HEK293 (cell line): ENCODE measurements at regions of chr9 and their contacts with region 1.

Region 1: GRCh38 chr9:117399844-117400561 is 14.9 kb downstream of the ASTN2 start:
- H3K4me3 ChIP-seq: no peak overlapping the region
- H3K27ac ChIP-seq: no peak overlapping the region
- H3K4me1 ChIP-seq: peaks cover 5% of the 10 kb centered on the region; the same call in 1 of the 2 replicates
- CTCF ChIP-seq: no peak

Region 2: DNA sequence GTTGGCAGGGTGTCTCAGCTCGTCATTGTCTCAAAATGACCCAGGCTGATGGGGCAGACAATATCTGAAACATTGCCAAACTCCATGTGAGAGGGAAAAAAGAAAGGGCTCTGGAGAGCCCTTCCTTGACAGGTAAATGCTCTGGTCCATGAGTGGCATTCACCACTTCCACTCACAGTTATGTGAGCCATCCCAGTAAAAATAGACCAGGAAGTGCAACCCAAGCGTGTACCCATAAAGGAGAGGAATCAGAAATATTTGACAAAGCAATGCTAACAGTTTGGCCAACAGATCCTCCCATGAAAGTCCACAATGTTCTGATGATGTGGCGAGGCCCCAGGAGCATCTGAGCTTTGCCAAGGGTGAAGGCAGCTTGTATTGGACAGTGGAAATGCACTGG is 34.6 kb before region 1 on chr9:
- CTCF ChIA-PET with region 1: no interaction called
- POLR2A ChIA-PET with region 1: no interaction called
- H3K4me3 ChIP-seq: no peak overlapping the region
- H3K27ac ChIP-seq: no peak overlapping the region
- H3K4me1 ChIP-seq: no peaks in the 10 kb centered on the region
- CTCF ChIP-seq: no peak

Region 3: DNA sequence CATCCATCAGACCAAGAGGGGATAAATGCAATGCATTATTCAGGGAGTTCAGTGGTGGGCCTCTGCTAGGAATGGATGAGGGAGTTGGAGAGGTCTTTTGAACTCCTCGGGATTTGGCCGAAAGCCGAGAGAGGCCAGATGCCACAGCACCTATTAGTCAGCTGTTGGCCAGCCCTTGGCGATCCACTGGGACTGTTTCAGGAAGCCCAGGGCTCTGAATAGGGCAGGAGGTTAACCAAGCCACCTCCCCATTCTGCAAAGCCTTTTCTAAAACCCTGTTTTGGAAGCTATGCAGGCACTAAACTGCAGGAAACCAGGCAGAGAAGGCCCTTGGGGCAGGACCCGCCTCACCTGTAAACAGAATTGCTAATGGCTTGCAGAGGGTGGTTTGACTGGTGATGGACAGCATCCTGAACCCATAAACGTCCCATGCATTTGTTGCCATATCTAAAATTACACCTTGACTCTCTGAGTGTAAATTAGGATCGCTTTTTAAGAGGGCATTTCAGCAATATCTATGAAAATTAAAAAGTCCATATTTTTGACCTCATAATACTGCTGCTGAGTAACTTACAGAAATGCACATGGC is 22.9 kb before region 1 on chr9:
- CTCF ChIA-PET with region 1: no interaction called
- POLR2A ChIA-PET with region 1: no interaction called
- H3K4me3 ChIP-seq: no peak overlapping the region
- H3K27ac ChIP-seq: no peak overlapping the region
- H3K4me1 ChIP-seq: no peaks in the 10 kb centered on the region
- CTCF ChIP-seq: no peak

Region 4: DNA sequence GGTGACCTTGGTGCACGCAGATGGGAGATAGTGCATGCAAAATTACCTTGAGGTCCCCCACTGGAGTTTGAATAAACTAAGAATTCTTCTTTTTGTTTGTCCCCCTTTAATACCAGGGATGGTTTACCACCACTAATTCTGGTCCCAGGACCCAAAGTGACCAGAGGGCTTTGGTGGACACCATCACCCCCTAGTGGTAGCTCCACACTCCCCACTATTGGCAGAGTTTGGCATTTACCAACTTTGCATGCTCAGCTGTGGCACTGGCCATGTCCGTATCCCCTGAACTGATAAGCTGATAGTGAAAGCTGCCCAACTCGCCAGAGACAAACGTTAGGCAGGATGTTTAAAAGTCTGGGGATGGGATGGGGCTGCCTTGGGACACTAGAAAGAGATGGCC is 11.5 kb after region 1 on chr9:
- CTCF ChIA-PET with region 1: interaction called, 25 read pairs
- POLR2A ChIA-PET with region 1: interaction called, 3 read pairs
- H3K4me3 ChIP-seq: no peak overlapping the region
- H3K27ac ChIP-seq: no peak overlapping the region
- H3K4me1 ChIP-seq: no peaks in the 10 kb centered on the region
- CTCF ChIP-seq: no peak